ENCODE measurements at regions of chr12 and their contacts with region 1.

Region 1: DNA sequence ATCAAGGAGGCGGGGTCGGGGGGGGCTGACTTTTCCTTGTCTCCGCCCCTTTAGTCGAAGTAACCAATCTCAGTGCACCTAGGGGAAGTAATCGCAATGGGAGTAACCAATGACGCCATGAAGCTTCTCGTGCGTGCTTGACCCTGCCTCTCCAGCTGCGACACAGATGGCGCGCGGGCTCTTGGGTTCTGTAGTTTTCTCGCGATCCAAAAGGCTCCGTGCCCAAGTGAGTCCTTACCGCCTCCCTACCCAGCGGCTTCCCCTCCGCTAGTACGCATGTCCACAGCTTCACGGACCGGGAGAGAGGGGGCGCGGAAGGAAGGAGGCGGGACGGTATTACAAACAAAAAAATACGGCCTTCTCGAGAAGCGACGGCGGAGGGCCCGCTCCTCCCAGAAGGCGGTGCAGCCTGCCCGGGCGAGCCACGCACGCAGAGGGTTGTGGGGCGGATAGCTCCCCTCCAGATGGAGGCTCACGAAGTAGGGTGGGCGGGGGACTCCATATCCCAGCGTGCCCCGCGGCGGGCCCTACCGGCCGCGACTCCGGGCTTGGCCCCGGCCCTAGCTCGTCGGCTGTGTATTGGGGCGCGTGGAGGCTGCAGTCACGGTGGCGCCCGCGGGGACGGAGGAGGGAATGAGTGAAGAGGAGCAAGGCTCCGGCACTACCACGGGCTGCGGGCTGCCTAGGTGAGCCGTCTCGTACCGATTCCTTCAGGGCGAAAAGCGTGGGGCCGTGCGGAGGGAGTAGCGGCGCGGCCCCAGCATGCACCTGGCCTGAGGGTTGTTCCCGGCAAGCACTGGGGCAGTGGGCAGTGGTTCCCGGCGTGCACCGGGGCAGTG is at the start of gene TARBP2:
- DNase-seq: peak; percentile 95 to 98 (median 98)
- ATAC-seq: peak; percentile 82 to 90 (median 86)
- H3K4me3 ChIP-seq: peak within 1 kb of the TSS; percentile 86 to 89 (median 88)
- H3K27ac ChIP-seq: peak within 1 kb of the TSS; percentile 91 to 99 (median 98)
- H3K4me1 ChIP-seq: peaks cover 0 to 16% (median 9%) of the 10 kb centered on the region in 4 donors
- H3K27me3 ChIP-seq: no peaks in the 10 kb centered on the region
- CTCF ChIP-seq: peak in 1 of 4 donors; percentile 4
- POLR2A ChIP-seq: peak; percentile 75
- total RNA-seq, gene TARBP2: 15.1 to 20.8 (median 17.8) TPM

Region 2: GRCh38 chr12:53321074-53321814 is 179.8 kb before region 1 on chr12 and contains the start of gene AAAS:
- intact Hi-C with region 1: loop called in 1 of 2 experiments (anchors 10 kb)
- DNase-seq: peak; percentile 98 to 99 (median 98)
- ATAC-seq: peak; percentile 86 to 91 (median 86)
- H3K4me3 ChIP-seq: peak within 1 kb of the TSS; percentile 76 to 94 (median 90)
- H3K27ac ChIP-seq: peak within 1 kb of the TSS; percentile 95 to 96 (median 95)
- H3K4me1 ChIP-seq: peaks cover 0 to 32% (median 10%) of the 10 kb centered on the region in 4 donors
- H3K27me3 ChIP-seq: no peaks in the 10 kb centered on the region
- CTCF ChIP-seq: peak; percentile 98 to 100 (median 99)
- POLR2A ChIP-seq: peak; percentile 76
- total RNA-seq, gene AAAS: 22.0 to 29.1 (median 26.7) TPM

Region 3: DNA sequence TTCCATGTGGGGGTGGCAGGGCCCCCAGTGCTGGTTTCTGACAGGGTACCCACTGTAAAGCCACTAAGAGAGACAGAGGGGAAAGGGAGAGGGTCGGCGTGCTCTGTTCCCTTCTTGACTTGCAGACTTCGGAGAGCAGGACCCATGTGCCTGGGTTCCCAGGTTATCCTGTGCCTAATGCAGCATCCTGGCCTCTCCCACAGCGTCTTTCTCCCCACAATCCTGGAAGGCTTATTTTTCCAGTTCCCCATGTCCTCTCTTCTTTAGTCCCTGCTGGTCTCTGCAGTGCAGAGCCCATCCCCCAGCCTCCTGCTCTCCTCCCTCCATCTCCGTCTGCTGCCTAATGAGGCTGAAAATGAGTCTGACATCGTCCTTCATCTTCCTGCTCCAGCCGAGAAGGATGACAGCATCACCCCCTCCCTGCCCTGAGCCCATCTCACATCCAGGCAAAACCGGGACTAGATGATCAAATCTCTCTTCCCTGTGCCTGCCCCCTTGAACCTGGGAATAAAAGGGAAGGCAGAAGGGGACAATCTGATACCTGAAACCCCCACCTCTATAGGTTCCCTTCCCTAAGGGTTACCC is 211.2 kb after region 1 on chr12:
- intact Hi-C with region 1: no loop called
- DNase-seq: no peak
- ATAC-seq: no peak
- H3K4me3 ChIP-seq: no peak overlapping the region
- H3K27ac ChIP-seq: no peak overlapping the region
- H3K4me1 ChIP-seq: no peaks in the 10 kb centered on the region
- H3K27me3 ChIP-seq: no peaks in the 10 kb centered on the region
- CTCF ChIP-seq: no peak
- POLR2A ChIP-seq: no peak

Region 4: DNA sequence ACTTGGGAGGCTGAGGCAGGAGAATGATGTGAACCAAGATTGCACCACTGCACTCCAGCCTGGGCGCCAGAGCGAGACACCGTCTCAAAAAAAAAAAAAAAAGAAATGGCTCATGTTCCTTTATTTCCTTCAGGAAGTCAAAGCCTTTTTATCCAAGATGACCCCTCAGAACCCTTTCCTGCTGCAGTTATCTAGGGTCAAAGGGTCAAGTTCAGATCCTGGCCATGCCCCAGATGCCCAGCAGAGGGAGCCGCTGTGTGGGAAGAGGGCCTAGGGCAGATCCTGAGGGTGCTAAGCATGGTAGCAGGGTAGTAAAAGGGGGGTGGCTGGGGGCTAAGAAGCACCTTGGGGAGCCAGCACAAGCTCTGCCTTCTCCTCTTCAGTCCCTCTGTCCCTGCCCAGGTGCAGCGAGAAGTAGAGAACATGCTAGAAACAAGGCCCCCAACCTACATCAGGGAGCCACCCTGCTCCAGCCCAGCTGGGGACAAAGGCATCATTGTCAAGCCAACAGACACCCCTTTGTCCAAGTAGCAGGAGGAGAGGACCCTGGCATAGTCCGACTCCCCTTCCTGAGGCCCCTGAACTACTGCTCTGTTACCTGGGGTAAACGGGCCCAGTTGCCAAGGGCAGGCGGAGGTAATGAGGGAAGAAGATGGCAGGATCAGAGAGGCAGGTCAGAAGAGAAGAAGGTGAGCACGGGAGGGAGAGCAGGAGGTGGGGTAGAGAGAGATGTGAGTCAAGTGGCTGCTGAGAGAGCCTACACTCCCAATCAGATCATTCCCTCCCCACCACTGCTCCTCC is 793.4 kb after region 1 on chr12:
- intact Hi-C with region 1: no loop called
- DNase-seq: peak; percentile 73 to 77 (median 74)
- ATAC-seq: peak; percentile 89 to 95 (median 92)
- H3K4me3 ChIP-seq: no peak overlapping the region
- H3K27ac ChIP-seq: no peak overlapping the region
- H3K4me1 ChIP-seq: no peaks in the 10 kb centered on the region
- H3K27me3 ChIP-seq: no peaks in the 10 kb centered on the region
- CTCF ChIP-seq: peak; percentile 64 to 80 (median 78)
- POLR2A ChIP-seq: no peak

Measured in right lobe of liver (tissue), 6 donors.